Tibial artery (tissue), 4 donors: ENCODE measurements at regions of chr4 and their contacts with region 1.

Region 1: DNA sequence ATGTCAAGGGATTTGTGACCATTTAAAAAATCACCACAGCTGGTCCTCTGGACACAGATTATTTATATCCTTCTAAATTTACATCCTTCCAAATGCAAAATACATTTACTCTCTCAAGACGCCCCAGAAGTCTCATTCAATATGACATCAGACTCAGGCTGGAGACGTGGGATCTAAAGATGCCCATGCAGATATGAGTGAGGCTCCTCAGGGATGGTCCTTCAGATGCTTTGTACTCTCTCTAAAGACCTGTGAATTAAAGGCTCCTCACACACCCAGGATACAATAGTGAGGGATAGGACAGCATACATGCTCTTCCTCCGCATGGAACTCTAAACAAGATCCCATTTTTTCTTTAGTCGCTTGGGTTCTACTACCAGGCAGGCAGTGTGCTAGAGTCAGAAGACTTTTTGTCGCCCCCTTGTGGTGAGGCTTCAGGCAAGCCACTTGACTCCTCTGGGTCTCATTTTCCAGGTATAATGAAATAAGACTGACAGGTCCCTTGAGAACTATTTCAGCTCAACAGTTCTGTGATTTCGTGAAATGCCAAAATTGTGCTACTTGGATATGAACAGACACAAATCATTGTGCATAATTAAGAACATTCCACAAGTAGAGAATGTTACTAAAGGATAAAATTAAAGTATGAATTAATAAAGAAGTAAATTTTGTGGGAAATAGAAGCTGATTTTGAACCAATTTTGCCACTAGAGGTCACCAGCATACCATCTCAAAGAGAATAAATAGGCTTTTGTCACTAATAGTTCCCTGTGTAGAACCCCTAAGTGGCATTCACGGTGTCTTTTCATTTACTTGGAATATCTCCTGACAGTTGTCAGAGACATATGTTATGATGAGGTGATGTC is 13.7 kb upstream of the SCOC start:
- DNase-seq: peak; percentile 71 to 75
- H3K4me3 ChIP-seq: no peak overlapping the region
- H3K27ac ChIP-seq: no peak overlapping the region
- H3K4me1 ChIP-seq: no peaks in the 10 kb centered on the region
- H3K27me3 ChIP-seq: peaks cover 0 to 3% of the 10 kb centered on the region in 2 donors
- CTCF ChIP-seq: peak; percentile 63 to 72

Region 2: DNA sequence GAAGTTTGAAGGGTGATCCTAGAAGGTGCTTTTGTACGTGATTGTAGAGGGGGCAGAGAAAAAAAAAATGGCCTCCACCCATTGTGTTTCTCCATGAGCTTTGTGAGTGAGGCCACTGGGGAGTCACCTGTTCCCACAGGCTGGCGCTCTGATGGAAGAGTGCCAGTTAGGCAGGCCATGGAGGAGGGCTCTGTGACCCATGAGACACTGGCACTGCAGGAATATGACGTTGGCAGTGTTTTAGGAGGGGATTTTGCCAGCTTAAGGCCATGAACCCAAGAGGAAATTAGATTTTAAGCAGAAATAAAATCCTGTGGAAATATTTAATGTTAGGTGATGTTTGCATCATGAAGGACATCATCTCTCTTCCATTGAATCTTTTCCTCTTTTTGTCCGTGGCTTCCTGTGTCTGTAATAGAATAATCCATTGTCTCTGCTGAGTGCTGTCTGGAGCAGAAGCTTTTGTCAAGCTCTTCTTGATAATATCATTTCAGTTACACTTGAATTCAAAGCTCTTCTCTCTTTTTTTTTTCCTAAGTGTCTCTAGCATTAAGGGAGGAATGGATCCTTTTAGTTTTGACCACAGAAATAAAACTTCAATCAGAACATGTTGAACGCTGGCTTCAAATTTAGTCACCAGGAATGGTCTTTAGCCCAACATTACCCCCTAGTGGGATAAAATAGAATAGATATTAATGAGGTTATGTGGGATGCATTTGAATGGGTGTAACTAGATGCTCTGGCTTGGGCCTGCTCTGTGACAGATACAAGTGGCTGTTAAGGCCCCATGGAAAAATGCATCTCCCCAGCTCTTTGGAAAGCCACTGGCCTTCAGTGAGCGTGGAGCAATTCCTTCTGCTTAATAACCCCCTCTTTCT is 250.0 kb after region 1 on chr4:
- intact Hi-C with region 1: loop called (anchors 10 kb)
- DNase-seq: no peak
- H3K4me3 ChIP-seq: no peak overlapping the region
- H3K27ac ChIP-seq: no peak overlapping the region
- H3K4me1 ChIP-seq: no peaks in the 10 kb centered on the region
- H3K27me3 ChIP-seq: no peaks in the 10 kb centered on the region
- CTCF ChIP-seq: peak; percentile 35 to 49

Region 3: DNA sequence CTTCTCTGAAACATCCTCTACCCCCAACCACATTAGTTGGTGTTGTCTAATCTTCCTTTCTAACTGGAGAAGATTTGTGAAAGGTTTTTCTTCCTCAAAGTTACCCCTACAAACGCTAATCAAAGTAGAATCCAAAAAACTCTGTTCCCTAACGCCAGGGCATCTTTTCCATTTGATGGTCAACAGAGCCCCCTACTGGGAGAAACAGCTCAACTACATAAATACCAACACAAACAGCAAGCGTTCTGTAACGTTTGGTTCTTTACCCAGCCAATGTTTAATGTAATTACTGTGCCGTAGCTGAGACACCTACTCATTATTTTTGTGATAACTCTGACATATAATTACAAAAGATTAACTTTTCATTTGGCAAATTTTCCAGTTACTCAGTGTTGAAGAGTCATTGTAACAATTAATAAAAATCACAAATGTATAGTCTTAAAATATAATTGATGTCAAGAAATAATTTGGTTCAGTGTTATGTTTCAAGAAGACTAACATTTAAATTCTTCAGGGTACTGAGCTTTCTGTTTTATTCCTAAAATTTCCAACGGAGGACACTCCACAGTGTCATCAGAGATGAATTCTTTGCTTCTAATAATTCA is 491.3 kb after region 1 on chr4:
- intact Hi-C with region 1: loop called (anchors 10 kb)
- DNase-seq: peak in 1 of 2 donors; percentile 30
- H3K4me3 ChIP-seq: no peak overlapping the region
- H3K27ac ChIP-seq: no peak overlapping the region
- H3K4me1 ChIP-seq: peaks cover 0 to 6% (median 0%) of the 10 kb centered on the region in 4 donors
- H3K27me3 ChIP-seq: peaks cover 0 to 8% of the 10 kb centered on the region in 2 donors
- CTCF ChIP-seq: peak; percentile 72 to 88

Region 4: DNA sequence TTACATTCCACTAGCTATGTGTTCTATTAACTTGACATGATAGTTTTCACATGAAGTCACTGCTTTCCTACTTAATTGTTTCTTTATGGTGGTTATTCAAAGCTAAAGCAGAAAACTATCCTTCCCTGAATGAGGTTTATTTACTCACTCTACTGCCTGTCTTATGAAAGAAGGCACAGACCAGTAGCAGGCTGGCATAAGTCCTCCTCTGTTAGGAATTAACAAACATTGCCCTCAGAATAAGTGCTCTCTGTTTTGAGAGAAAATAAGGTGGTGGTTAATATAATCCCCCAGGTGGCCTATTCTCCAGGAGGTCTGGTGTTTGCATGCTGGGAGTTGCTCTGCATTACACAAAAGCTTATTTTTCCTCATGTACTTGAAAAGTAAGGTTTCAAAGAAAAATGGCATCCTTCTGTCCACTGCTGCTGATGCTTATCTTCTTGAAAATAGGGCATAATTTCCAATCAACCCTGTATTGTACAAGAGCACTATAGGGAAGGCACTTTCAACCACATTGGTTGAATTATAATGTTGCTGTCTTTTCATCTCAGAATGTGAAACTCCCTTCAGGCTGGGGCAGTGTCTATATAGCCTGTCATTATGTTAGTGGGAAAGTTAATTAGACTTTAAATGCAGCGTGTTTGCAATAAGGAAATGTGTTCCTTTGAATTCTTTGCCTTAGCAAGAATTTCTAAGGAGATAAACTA is 516.1 kb after region 1 on chr4:
- intact Hi-C with region 1: no loop called
- DNase-seq: no peak
- H3K4me3 ChIP-seq: no peak overlapping the region
- H3K27ac ChIP-seq: no peak overlapping the region
- H3K4me1 ChIP-seq: peaks cover 0 to 3% (median 0%) of the 10 kb centered on the region in 4 donors
- H3K27me3 ChIP-seq: no peaks in the 10 kb centered on the region
- CTCF ChIP-seq: no peak